Heart left ventricle (tissue), 16 donors: ENCODE measurements at regions of chr1 and their contacts with region 1.

Region 1: GRCh38 chr1:89657886-89658285 is 25.0 kb downstream of the LRRC8C start:
- DNase-seq: no peak
- ATAC-seq: no peak
- H3K4me3 ChIP-seq: no peak overlapping the region
- H3K27ac ChIP-seq: peak overlapping the region in 1 of 12 donors; percentile 34
- H3K4me1 ChIP-seq: peaks cover 7 to 79% (median 42%) of the 10 kb centered on the region in 12 donors
- H3K27me3 ChIP-seq: no peaks in the 10 kb centered on the region
- CTCF ChIP-seq: no peak
- POLR2A ChIP-seq: no peak

Region 2: GRCh38 chr1:89698624-89699023 is 40.7 kb after region 1 on chr1:
- intact Hi-C with region 1: loop called in 1 of 10 experiments (anchors 5 kb)
- DNase-seq: no peak
- ATAC-seq: no peak
- H3K4me3 ChIP-seq: no peak overlapping the region
- H3K27ac ChIP-seq: peak overlapping the region in 3 of 12 donors; percentile 1 to 69 (median 27)
- H3K4me1 ChIP-seq: peaks cover 7 to 86% (median 52%) of the 10 kb centered on the region in 12 donors
- H3K27me3 ChIP-seq: no peaks in the 10 kb centered on the region
- CTCF ChIP-seq: no peak
- POLR2A ChIP-seq: no peak